ENCODE measurements at regions of chr1 and their contacts with region 1.

Region 1: DNA sequence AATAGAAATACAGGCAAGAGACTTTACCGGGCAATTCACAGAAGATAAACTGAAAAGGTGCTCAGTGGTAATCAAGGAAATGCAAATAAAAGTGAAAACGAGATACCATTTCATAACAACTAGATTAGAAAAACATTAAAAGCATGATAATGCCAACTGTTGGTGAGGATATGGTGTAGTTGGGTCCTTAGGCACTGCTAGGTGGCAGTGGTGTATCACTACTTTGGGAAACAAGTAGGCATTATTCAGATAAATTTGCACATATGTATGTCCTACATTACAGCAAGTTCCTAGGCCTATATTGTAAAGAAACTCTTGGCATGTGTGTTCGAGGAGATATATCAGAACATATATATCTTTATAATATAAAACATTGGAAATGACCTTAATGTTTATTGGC is 31.0 kb downstream of the AZIN2 start:
- DNase-seq: no peak
- ATAC-seq: peak; percentile 79
- H3K4me3 ChIP-seq: no peak overlapping the region
- H3K27ac ChIP-seq: no peak overlapping the region
- H3K4me1 ChIP-seq: no peaks in the 10 kb centered on the region
- H3K27me3 ChIP-seq: no peaks in the 10 kb centered on the region
- CTCF ChIP-seq: peak; percentile 37 to 64 (median 44); a peak in 4 of 6 replicates
- EP300 ChIP-seq: no peak
- POLR2A ChIP-seq: no peak
- RAD21 ChIP-seq: peak; percentile 59

Region 2: DNA sequence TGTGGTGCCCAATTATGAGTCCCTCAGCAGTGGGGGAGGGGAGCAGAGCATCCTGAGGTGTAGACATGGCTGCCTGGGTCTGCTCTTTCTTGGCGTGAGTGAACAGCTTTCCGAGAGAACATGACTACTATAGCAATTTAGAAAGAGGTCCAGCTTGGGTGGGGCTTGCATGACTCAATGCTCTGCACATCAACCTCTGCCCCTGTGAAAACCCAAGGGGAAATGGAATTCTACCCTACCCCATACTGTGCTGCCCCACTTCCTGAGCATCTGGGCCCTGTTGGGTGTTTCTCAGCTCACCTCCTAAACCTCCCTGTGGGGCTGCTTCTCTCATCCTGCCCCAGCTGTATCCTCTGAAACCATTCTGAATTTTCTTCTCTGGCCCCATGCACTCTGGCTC is 39.3 kb before region 1 on chr1:
- CTCF ChIA-PET with region 1: no interaction called
- POLR2A ChIA-PET with region 1: no interaction called
- RAD21 ChIA-PET with region 1: no interaction called
- SMC1A ChIA-PET with region 1: no interaction called
- in situ Hi-C with region 1: no loop called
- intact Hi-C with region 1: no loop called
- DNase-seq: no peak
- ATAC-seq: no peak
- H3K4me3 ChIP-seq: no peak overlapping the region
- H3K27ac ChIP-seq: no peak overlapping the region
- H3K4me1 ChIP-seq: no peaks in the 10 kb centered on the region
- H3K27me3 ChIP-seq: no peaks in the 10 kb centered on the region
- CTCF ChIP-seq: no peak
- EP300 ChIP-seq: no peak
- POLR2A ChIP-seq: no peak
- RAD21 ChIP-seq: no peak

Region 3: GRCh38 chr1:33094971-33095604 is 16.9 kb before region 1 on chr1:
- CTCF ChIA-PET with region 1: interaction called, 10 read pairs
- POLR2A ChIA-PET with region 1: no interaction called
- RAD21 ChIA-PET with region 1: no interaction called
- SMC1A ChIA-PET with region 1: no interaction called
- in situ Hi-C with region 1: no loop called
- intact Hi-C with region 1: no loop called
- DNase-seq: no peak
- ATAC-seq: no peak
- H3K4me3 ChIP-seq: no peak overlapping the region
- H3K27ac ChIP-seq: no peak overlapping the region
- H3K4me1 ChIP-seq: peaks cover 6% of the 10 kb centered on the region; the same call in 1 of the 2 replicates
- H3K27me3 ChIP-seq: no peaks in the 10 kb centered on the region
- CTCF ChIP-seq: peak; percentile 83 to 99 (median 96)
- EP300 ChIP-seq: no peak
- POLR2A ChIP-seq: no peak
- RAD21 ChIP-seq: peak; percentile 49

Region 4: DNA sequence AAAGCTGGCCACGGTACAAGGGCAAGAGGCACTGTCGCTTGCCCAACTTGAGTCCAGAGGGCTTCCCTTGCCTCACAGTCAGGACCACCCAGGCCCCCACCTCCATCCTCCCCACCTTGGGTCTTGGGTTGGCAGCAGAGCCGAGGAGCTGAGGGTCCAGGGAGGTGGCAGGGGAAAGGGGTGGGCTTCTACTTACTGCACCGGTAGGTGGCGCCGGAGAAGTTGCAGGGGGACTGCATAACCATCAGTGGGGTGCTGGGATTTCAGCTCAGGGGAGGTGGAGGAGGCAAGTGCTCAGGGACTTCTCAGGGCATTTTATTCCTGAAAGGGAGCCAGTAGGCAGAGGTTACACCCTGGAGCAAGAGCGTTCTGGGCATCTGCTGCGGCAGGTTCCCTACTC is 25.8 kb after region 1 on chr1:
- CTCF ChIA-PET with region 1: interaction called, 16 read pairs
- POLR2A ChIA-PET with region 1: interaction called, 4 read pairs
- RAD21 ChIA-PET with region 1: no interaction called
- SMC1A ChIA-PET with region 1: no interaction called
- in situ Hi-C with region 1: no loop called
- intact Hi-C with region 1: no loop called
- DNase-seq: no peak
- ATAC-seq: peak; percentile 74
- H3K4me3 ChIP-seq: no peak overlapping the region
- H3K27ac ChIP-seq: no peak overlapping the region
- H3K4me1 ChIP-seq: no peaks in the 10 kb centered on the region
- H3K27me3 ChIP-seq: no peaks in the 10 kb centered on the region
- CTCF ChIP-seq: peak; percentile 48 to 68 (median 64)
- EP300 ChIP-seq: no peak
- POLR2A ChIP-seq: no peak
- RAD21 ChIP-seq: peak; percentile 54

Region 5: DNA sequence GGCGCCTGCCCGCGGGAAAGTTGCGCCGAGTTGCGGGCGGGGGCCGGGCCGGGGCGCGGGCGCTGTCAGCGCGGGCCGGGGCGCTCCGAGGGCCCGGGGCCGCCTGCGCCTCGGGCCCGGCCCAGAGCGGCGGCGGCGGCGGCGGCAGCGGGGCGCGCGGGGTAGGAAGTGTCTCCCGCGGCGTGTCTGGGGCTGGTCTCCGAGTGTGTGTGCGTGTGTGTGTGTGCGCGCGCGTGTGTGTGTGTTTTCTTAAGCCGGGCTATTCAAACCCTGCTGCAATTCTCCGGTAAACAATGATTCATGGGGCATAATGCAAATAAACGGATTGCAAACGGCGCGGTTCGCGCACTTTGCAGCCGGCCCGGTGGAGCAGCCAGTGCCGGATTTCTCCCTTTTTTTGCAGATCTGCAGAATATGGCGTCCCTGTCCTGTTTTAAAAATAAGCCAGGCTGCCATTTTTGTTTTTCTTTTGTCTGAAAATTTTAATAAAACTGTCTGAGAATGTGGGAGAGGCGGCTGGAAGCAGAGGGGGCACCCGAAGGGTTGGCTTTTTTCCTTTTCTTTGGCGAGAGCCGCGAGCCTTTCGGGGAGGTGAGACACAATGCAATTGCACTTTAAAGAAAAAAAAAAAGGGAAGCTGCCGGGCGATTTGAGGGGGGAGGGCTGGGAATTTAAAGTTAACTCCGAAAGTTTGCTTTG is 144.9 kb after region 1 on chr1:
- CTCF ChIA-PET with region 1: no interaction called
- POLR2A ChIA-PET with region 1: no interaction called
- RAD21 ChIA-PET with region 1: no interaction called
- SMC1A ChIA-PET with region 1: no interaction called
- in situ Hi-C with region 1: no loop called
- intact Hi-C with region 1: no loop called
- DNase-seq: no peak
- ATAC-seq: peak; percentile 41
- H3K4me3 ChIP-seq: peak overlapping the region; percentile 94
- H3K27ac ChIP-seq: peak overlapping the region; percentile 90
- H3K4me1 ChIP-seq: peaks cover 29% of the 10 kb centered on the region
- H3K27me3 ChIP-seq: no peaks in the 10 kb centered on the region
- CTCF ChIP-seq: no peak
- EP300 ChIP-seq: no peak
- POLR2A ChIP-seq: no peak
- RAD21 ChIP-seq: no peak

Region 6: GRCh38 chr1:33455539-33456501 is 343.9 kb after region 1 on chr1:
- CTCF ChIA-PET with region 1: interaction called, 7 read pairs
- POLR2A ChIA-PET with region 1: no interaction called
- RAD21 ChIA-PET with region 1: no interaction called
- SMC1A ChIA-PET with region 1: no interaction called
- in situ Hi-C with region 1: no loop called
- intact Hi-C with region 1: loop called (anchors 5 kb)
- DNase-seq: no peak
- ATAC-seq: peak; percentile 94
- H3K4me3 ChIP-seq: no peak overlapping the region
- H3K27ac ChIP-seq: no peak overlapping the region
- H3K4me1 ChIP-seq: peaks cover 27% of the 10 kb centered on the region
- H3K27me3 ChIP-seq: no peaks in the 10 kb centered on the region
- CTCF ChIP-seq: peak; percentile 74 to 80 (median 74)
- EP300 ChIP-seq: no peak
- POLR2A ChIP-seq: no peak
- RAD21 ChIP-seq: peak; percentile 81